CD8-positive, alpha-beta memory T cell (primary cell): ENCODE measurements at regions of chr21 and their contacts with region 1.

Region 1: DNA sequence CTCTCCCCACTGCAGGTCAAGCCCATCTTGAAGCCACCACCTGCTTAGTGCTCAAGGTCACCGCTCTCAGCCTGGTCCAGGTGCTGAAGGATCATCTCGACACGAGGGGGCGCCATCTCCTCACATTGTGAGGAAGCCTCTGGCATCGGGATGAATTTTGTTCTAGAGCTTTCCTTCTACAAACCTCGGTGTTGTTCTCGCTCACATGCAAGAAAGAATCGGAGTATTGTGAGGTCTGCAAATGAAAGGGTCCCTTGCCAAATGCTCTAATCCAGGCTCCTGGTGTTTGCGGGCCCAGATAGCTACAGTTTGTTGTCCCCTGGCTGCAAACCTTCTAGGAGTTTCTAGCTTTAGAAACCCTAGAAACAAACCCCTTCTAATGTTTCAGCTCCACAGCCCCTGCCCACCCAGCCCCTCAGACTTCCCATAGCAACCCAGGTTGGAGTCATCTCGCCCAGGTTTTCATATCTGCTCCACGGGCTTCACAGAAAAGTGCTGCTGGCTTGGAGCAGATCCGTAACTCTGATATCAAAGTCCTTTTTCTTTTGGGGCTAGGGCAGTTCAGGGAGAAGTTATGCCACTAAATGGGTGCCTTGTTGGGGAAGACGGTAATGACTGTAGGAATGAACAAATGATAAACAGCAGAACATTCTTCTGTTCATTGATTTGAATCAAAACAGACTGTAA is 8.6 kb upstream of the ATP5PO start:
- DNase-seq: peak; percentile 72 to 90 (median 80)
- H3K4me3 ChIP-seq: peak overlapping the region; percentile 13
- H3K4me3 Mint-ChIP-seq: peak overlapping the region in 3 of 7 donors; percentile 26 to 61 (median 51)
- H3K27ac ChIP-seq: no peak overlapping the region
- H3K27ac Mint-ChIP-seq: peak overlapping the region; percentile 39 to 86 (median 69)
- H3K4me1 ChIP-seq: peaks cover 12% of the 10 kb centered on the region
- H3K4me1 Mint-ChIP-seq: peaks cover 10 to 15% (median 13%) of the 10 kb centered on the region in 3 donors
- H3K27me3 ChIP-seq: no peaks in the 10 kb centered on the region
- H3K27me3 Mint-ChIP-seq: no peaks in the 10 kb centered on the region

Region 2: DNA sequence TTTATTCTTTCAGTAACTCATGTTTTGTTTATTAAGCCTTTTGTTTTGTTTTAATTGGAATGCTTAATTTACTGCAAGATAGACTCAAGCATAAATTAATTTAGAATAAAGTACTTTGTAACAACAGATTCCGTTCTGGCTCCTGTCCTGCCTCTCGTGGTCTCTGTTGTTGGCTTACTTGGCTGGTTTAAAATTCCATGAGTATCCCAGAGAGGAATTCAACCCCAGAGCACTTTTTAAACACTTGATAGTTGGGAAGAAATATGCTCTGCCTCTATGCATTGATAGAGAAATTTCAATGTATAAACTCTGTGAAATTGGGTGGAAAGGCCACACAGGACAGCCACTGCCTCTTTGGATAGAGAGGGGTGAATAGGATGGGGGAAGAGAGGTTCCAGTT is 98.3 kb before region 1 on chr21:
- CTCF ChIA-PET with region 1: no interaction called
- POLR2A ChIA-PET with region 1: no interaction called
- DNase-seq: no peak
- H3K4me3 ChIP-seq: no peak overlapping the region
- H3K4me3 Mint-ChIP-seq: no peak overlapping the region
- H3K27ac ChIP-seq: no peak overlapping the region
- H3K27ac Mint-ChIP-seq: no peak overlapping the region
- H3K4me1 ChIP-seq: no peaks in the 10 kb centered on the region
- H3K4me1 Mint-ChIP-seq: no peaks in the 10 kb centered on the region
- H3K27me3 ChIP-seq: no peaks in the 10 kb centered on the region
- H3K27me3 Mint-ChIP-seq: peaks cover 3 to 5% of the 10 kb centered on the region in 2 donors

Region 3: DNA sequence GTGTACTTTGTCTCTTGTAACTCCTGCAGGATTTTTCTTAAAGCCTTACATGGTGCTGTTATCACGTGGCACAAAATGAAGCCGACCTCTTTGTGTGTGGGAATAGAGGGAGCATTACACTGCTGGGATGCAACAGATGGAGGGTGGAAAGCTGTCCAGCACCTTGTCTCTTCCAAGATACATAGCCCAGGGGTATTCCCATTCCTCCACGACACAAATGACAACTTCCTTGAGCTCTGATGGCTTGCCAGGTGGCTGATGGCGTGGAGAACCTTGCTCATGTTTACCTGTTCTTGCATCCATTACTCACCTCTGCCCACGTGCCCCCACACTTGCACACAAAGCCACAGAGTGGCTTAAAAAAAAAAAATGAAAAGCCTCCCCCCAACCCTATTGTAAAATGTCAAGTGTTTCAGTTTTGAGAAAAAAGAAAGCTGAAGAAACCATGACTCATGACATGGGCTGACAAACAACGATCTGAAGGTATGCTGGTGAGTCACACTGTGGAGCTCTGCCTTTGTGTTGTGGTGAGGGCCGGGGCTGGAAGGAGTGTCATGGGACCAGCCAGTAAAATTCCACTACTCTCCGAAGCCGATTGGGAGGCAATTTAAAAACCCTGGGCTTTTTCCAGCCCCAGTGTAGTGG is 23.4 kb after region 1 on chr21:
- CTCF ChIA-PET with region 1: interaction called, 51 read pairs
- POLR2A ChIA-PET with region 1: interaction called, 29 read pairs
- DNase-seq: peak; percentile 78 to 95 (median 90)
- H3K4me3 ChIP-seq: peak overlapping the region; percentile 49
- H3K4me3 Mint-ChIP-seq: peak overlapping the region; percentile 61 to 75 (median 71)
- H3K27ac ChIP-seq: peak overlapping the region; percentile 100
- H3K27ac Mint-ChIP-seq: peak overlapping the region; percentile 95 to 99 (median 98)
- H3K4me1 ChIP-seq: peaks cover 74% of the 10 kb centered on the region
- H3K4me1 Mint-ChIP-seq: peaks cover 76 to 93% (median 83%) of the 10 kb centered on the region in 3 donors
- H3K27me3 ChIP-seq: no peaks in the 10 kb centered on the region
- H3K27me3 Mint-ChIP-seq: peaks cover 0 to 5% of the 10 kb centered on the region in 2 donors

Region 4: GRCh38 chr21:33968080-33968994 is 44.1 kb after region 1 on chr21:
- CTCF ChIA-PET with region 1: interaction called, 21 read pairs
- POLR2A ChIA-PET with region 1: no interaction called
- DNase-seq: peak in 1 of 5 donors; percentile 41
- H3K4me3 ChIP-seq: no peak overlapping the region
- H3K4me3 Mint-ChIP-seq: no peak overlapping the region
- H3K27ac ChIP-seq: no peak overlapping the region
- H3K27ac Mint-ChIP-seq: peak overlapping the region in 7 of 8 donors; percentile 59 to 87 (median 74)
- H3K4me1 ChIP-seq: no peaks in the 10 kb centered on the region
- H3K4me1 Mint-ChIP-seq: peaks cover 16 to 55% (median 47%) of the 10 kb centered on the region in 3 donors
- H3K27me3 ChIP-seq: no peaks in the 10 kb centered on the region
- H3K27me3 Mint-ChIP-seq: no peaks in the 10 kb centered on the region

Region 5: GRCh38 chr21:34073032-34073869 is 149.0 kb after region 1 on chr21 and contains the starts of genes MRPS6 and SLC5A3:
- CTCF ChIA-PET with region 1: interaction called, 43 read pairs
- POLR2A ChIA-PET with region 1: interaction called, 5 read pairs
- DNase-seq: peak; percentile 63 to 76 (median 71)
- H3K4me3 ChIP-seq: peak within 1 kb of the TSS; percentile 61
- H3K4me3 Mint-ChIP-seq: peak within 1 kb of the TSS; percentile 91 to 97 (median 95)
- H3K27ac ChIP-seq: peak within 1 kb of the TSS; percentile 63
- H3K27ac Mint-ChIP-seq: peak within 1 kb of the TSS; percentile 64 to 97 (median 92)
- H3K4me1 ChIP-seq: peaks cover 38% of the 10 kb centered on the region
- H3K4me1 Mint-ChIP-seq: peaks cover 6 to 47% (median 44%) of the 10 kb centered on the region in 3 donors
- H3K27me3 ChIP-seq: no peaks in the 10 kb centered on the region
- H3K27me3 Mint-ChIP-seq: peaks cover 0 to 5% of the 10 kb centered on the region in 2 donors
- total RNA-seq, gene MRPS6: 134 to 136 TPM
- total RNA-seq, gene SLC5A3: 23.2 to 23.8 TPM

Region 6: GRCh38 chr21:34227386-34227852 is 303.2 kb after region 1 on chr21:
- CTCF ChIA-PET with region 1: interaction called, 12 read pairs
- POLR2A ChIA-PET with region 1: no interaction called
- DNase-seq: no peak
- H3K4me3 ChIP-seq: no peak overlapping the region
- H3K4me3 Mint-ChIP-seq: no peak overlapping the region
- H3K27ac ChIP-seq: no peak overlapping the region
- H3K27ac Mint-ChIP-seq: no peak overlapping the region
- H3K4me1 ChIP-seq: no peaks in the 10 kb centered on the region
- H3K4me1 Mint-ChIP-seq: no peaks in the 10 kb centered on the region
- H3K27me3 ChIP-seq: no peaks in the 10 kb centered on the region
- H3K27me3 Mint-ChIP-seq: peaks cover 0 to 5% of the 10 kb centered on the region in 2 donors